Activated T-helper 1 cell treated with anti-CD3 and anti-CD28 coated beads, Interleukin-12 subunit alpha, Interleukin-12 subunit beta, Interleukin-2, Interleukin-4 antibody, amounts not matched to agents 30 ng/mL and 10 ng/mL and 1 ng/mL, durations not matched to agents 14 hours and 24 hours and 36 hours (primary cell): ENCODE measurements at regions of chr12 and their contacts with region 1.

Region 1: DNA sequence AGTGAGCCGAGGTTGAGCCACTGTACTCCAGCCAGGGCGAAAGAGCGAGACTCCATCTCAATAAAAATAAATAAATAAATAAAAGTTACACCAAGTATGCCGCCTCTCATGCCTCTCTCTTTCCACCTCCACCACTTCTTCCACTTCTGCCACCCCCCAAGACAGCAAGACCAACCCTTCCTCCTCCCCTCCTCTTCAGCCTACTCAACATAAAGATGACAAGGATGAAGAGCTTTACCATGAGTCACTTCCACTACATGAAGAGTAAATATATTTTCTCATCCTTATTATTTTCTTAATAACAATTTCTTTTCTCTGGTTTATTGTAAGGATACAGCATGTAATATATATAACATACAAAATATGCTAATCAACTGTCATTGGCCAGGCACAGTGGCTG is 3.6 kb upstream of the TMED2 start:
- DNase-seq: no peak
- H3K4me3 Mint-ChIP-seq: no peak overlapping the region
- H3K27ac Mint-ChIP-seq: no peak overlapping the region
- H3K4me1 Mint-ChIP-seq: peaks cover 18% of the 10 kb centered on the region
- H3K27me3 Mint-ChIP-seq: no peaks in the 10 kb centered on the region

Region 2: DNA sequence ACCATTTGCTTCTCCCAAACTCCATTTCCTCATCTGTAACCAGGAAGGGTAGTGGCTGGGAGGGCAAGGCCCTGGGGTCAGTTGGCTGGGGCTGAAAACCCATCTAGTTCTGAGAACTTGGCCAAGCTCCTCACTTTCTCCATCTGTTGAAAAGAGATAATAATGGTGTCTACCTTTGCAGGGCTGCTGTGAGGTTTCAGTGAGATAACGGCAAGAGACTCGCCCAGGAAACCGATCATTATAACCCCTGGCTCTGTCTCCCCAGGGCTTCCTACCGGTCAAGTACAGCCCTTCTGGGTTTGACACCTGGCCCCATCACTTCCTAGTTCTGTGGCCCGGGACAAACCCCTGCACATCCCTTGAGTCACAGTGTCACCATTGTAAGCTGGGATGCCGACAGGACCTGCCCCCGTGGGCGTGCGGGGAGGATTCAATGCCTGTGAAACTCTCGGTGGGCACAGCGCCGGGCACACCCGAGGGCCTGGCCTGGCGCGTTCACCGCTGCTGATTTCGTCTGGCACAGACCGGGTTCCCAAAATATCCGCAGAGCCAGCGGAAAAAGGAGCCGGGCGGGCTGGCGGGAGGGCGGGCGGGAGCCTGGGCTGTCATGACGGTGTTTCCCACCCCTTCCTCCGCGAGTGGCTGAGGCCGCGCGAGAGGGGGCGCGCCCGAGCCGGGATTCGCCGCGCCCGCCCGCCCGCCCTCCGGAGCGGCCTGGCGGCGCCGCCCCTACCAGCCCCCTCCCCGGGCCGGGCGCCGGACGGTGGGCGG is 192.4 kb before region 1 on chr12:
- intact Hi-C with region 1: loop called (anchors 1 kb)
- DNase-seq: peak; percentile 78
- H3K4me3 Mint-ChIP-seq: peak overlapping the region; percentile 82
- H3K27ac Mint-ChIP-seq: peak overlapping the region; percentile 93
- H3K4me1 Mint-ChIP-seq: peaks cover 39% of the 10 kb centered on the region
- H3K27me3 Mint-ChIP-seq: no peaks in the 10 kb centered on the region

Region 3: GRCh38 chr12:123457980-123458783 is 122.6 kb before region 1 on chr12 and contains the start of gene SNRNP35:
- intact Hi-C with region 1: loop called (anchors 1 kb)
- DNase-seq: peak; percentile 79
- H3K4me3 Mint-ChIP-seq: peak within 1 kb of the TSS; percentile 95
- H3K27ac Mint-ChIP-seq: peak within 1 kb of the TSS; percentile 99
- H3K4me1 Mint-ChIP-seq: peaks cover 17% of the 10 kb centered on the region
- H3K27me3 Mint-ChIP-seq: no peaks in the 10 kb centered on the region
- total RNA-seq, gene SNRNP35: 31.5 and 34.5 TPM in 2 replicates

Region 4: DNA sequence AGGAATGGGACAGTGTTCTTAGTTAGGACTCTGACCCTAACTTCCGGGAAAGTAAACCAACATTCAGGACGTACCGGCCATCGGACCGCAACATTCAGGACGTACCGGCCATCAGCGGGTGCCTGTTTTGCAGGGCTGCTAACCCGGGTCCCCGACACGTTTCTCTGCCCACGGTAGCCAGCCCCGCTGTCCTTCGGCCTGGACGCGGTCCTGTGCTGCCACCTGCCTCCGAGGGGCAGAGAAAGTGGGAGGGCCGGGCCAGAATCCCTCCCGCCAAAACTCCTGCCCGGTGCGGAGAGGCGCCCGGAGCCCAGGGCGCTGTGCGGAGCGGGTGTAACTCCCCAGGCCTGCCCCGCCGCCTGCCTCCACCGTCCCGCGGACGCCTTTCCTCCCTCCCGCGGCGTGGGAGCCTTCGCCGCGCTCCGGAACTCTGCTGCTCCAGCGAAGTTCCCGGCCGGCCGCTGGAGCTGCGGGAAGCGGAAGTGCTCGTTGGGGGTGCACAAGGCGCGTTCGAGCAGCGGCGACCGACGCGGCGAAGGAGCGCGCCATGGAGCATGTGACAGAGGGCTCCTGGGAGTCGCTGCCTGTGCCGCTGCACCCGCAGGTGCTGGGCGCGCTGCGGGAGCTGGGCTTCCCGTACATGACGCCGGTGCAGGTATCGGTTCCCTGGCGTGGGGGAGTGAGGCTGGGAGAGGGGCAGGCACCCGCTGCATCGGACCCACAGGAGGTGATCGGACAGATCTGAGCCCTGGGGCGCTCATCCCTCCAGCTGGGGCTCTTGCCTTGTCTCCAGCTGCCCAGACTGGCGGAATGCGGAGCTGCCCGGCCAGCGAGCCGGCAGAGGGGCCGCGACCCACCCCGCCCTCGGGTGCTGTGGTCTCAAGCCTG is 21.1 kb after region 1 on chr12 and contains the start of gene DDX55:
- intact Hi-C with region 1: loop called (anchors 1 kb)
- DNase-seq: peak; percentile 83
- H3K4me3 Mint-ChIP-seq: peak within 1 kb of the TSS; percentile 87
- H3K27ac Mint-ChIP-seq: peak within 1 kb of the TSS; percentile 90
- H3K4me1 Mint-ChIP-seq: peaks cover 36% of the 10 kb centered on the region
- H3K27me3 Mint-ChIP-seq: no peaks in the 10 kb centered on the region
- total RNA-seq, gene DDX55: 72.1 and 72.3 TPM in 2 replicates

Region 5: GRCh38 chr12:123972457-123973401 is 392.0 kb after region 1 on chr12 and contains the starts of genes CCDC92 and ZNF664:
- intact Hi-C with region 1: loop called (anchors 5 kb)
- DNase-seq: peak; percentile 91
- H3K4me3 Mint-ChIP-seq: peak within 1 kb of the TSS; percentile 91
- H3K27ac Mint-ChIP-seq: peak within 1 kb of the TSS; percentile 78
- H3K4me1 Mint-ChIP-seq: peaks cover 53% of the 10 kb centered on the region
- H3K27me3 Mint-ChIP-seq: peaks cover 15% of the 10 kb centered on the region
- total RNA-seq, gene CCDC92: 7.7 and 8.3 TPM in 2 replicates
- total RNA-seq, gene ZNF664: 66.9 and 68.1 TPM in 2 replicates